H1 (cell line): ENCODE measurements at regions of chr12 and their contacts with region 1.

Region 1: DNA sequence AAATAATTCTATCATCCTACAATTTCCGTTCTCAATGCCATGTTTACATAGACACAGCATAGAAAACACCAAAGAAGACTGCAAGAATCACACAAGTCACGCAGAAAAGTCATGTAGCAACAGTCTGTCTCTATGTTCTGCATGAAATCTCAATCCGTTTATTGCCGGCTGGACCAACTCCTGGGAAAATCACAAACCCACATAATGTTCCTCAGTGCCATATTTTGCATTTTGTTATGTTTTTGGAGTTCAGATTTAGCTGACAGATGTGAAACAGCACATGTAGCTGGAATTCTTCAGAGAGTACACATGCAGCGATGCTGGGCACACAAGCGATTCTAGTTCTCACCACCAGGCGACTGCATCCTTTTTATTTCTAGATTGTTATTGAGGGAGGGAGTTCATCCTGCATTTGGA is 193.1 kb downstream of the APAF1 start:
- DNase-seq: no peak
- H3K4me3 ChIP-seq: no peak overlapping the region
- H3K27ac ChIP-seq: no peak overlapping the region
- H3K4me1 ChIP-seq: peaks cover 0 to 10% (median 5%) of the 10 kb centered on the region in 4 experiments; a peak in 5 of 7 replicates
- H3K27me3 ChIP-seq: no peaks in the 10 kb centered on the region
- CTCF ChIP-seq: peak; percentile 30 to 57 (median 36); a peak in 3 of 4 replicates
- EP300 ChIP-seq: no peak
- POLR2A ChIP-seq: no peak
- RAD21 ChIP-seq: peak; percentile 15 to 37; a peak in 1 of 4 replicates

Region 2: DNA sequence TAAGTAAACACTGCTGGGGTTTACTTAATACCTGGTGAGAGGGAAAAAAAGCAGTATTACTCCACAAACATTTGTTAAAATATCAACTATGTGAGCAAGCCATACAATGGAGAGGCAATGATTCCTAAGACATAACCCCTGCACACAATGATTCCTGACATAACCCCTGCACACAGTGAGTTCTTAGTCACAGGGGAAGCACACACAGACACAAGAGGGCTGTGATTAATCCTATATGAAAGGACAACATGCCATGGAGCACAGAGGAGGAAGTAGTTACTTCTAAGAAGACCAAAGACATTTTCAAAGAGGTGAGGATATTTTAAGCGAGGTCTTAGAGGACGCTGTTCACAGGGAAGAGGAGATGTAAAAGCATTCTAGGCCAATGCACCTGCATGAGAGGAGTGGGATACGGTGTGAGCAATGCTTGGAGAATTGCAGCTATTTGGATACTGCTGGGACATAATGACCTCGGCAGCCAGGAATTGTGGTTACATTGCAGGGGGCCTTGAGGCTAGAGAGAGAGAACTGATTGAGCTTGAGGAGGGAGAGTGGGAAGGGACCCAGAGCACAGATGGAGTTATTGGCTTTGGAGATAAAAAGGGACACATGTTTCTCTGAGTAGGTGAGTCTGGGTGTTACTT is 18.8 kb after region 1 on chr12:
- CTCF ChIA-PET with region 1: interaction called, 21 read pairs
- POLR2A ChIA-PET with region 1: interaction called, 3 read pairs
- DNase-seq: peak; percentile 60 to 80
- H3K4me3 ChIP-seq: no peak overlapping the region
- H3K27ac ChIP-seq: no peak overlapping the region
- H3K4me1 ChIP-seq: peaks cover 0 to 18% (median 16%) of the 10 kb centered on the region in 4 experiments; a peak in 5 of 7 replicates
- H3K27me3 ChIP-seq: no peaks in the 10 kb centered on the region
- CTCF ChIP-seq: no peak
- EP300 ChIP-seq: peak in 1 of 2 experiments; percentile 93; a peak in 1 of 3 replicates
- POLR2A ChIP-seq: peak; percentile 39 to 50; a peak in 2 of 3 replicates
- RAD21 ChIP-seq: no peak

Region 3: DNA sequence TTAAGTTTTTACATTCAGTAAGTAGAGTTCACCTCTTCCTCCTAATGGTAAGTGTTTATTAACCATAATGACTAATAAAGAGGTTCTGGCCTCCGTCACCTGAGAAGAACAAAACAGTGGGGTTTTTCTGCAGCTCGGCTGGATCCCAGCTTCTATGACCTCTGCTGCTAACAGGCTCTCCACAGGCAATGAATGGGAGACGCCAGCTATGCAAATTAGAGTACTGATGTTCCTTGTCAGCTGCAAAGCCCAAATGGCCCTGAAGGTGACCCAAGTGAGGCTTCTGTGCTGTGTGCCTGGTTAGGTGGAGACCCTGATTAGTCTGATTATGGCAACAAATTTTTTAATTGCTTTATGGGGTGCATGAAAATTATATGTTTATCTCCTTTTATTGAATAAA is 24.9 kb after region 1 on chr12:
- CTCF ChIA-PET with region 1: interaction called, 21 read pairs
- POLR2A ChIA-PET with region 1: interaction called, 3 read pairs
- DNase-seq: no peak
- H3K4me3 ChIP-seq: peak overlapping the region in 1 of 4 experiments; percentile 15; a peak in 1 of 8 replicates
- H3K27ac ChIP-seq: no peak overlapping the region
- H3K4me1 ChIP-seq: peaks cover 0 to 14% (median 10%) of the 10 kb centered on the region in 4 experiments; a peak in 5 of 7 replicates
- H3K27me3 ChIP-seq: no peaks in the 10 kb centered on the region
- CTCF ChIP-seq: peak in 2 of 3 experiments; percentile 4 to 28; a peak in 2 of 4 replicates
- EP300 ChIP-seq: no peak
- POLR2A ChIP-seq: no peak
- RAD21 ChIP-seq: peak; percentile 15 to 36; a peak in 2 of 4 replicates

Region 4: DNA sequence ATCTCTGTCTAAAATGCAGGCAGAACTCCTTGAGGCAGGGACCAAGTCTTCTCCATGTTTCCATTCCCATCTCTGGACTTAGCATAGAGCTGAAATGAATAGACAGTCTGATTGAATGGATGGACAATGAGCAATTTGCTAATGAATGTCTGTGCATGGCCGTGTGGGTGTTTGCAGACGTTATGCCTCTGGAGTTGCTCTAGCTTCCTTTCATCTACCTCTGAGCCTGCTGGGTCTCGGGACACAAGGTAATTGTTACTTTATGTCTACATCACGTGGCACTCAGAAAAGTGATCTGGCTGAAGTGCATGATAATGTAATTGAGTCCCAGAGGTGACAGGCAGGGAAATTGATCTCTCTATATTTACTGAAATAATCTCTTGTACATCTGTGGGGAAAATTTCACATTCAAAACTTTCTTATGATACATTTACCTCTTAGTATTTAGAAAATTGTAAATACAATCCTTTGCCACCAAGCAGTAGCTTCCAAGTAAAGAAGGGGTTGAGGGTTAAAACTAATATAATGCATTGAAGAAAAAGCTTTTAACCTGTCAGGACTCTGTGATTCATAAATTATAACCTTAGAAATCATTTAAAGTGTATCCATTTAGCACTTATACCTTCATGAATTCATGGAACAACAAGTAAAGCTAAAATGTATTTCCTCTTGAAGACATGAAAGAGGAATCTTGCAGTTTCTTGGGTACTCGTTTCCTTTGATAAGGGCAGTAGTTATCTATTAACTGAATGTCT is 230.9 kb after region 1 on chr12:
- CTCF ChIA-PET with region 1: no interaction called
- POLR2A ChIA-PET with region 1: no interaction called
- DNase-seq: no peak
- H3K4me3 ChIP-seq: no peak overlapping the region
- H3K27ac ChIP-seq: no peak overlapping the region
- H3K4me1 ChIP-seq: no peaks in the 10 kb centered on the region
- H3K27me3 ChIP-seq: no peaks in the 10 kb centered on the region
- CTCF ChIP-seq: no peak
- EP300 ChIP-seq: no peak
- POLR2A ChIP-seq: no peak
- RAD21 ChIP-seq: no peak